IMR-90 (cell line): ENCODE measurements at regions of chr4 and their contacts with region 1.

Region 1: DNA sequence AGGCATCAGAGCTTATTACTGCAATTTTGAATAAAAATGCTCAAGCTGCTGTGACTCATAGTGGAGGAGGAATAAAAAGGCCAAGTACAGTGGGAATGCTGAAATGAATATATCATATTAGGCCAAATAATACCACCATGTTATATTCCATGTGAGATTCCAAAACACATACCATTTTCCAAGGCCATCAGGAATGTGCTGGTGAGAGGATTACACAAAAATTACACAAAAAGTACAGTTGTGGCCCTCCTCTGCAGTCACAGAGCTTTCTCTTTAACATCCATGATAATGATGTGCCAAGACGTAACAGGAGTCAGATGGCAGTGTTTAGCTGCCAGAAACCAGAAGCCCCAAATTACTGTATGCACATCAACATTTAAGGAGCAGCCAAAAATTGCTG is 153.5 kb downstream of the PCDH18 start:
- DNase-seq: no peak
- ATAC-seq: 0 out of 2 replicates have a peak, but pooled peaks have one; percentile 27
- H3K4me3 ChIP-seq: no peak overlapping the region
- H3K27ac ChIP-seq: no peak overlapping the region
- H3K4me1 ChIP-seq: peaks cover 3% of the 10 kb centered on the region; the same call in 1 of the 2 replicates
- H3K27me3 ChIP-seq: no peaks in the 10 kb centered on the region
- CTCF ChIP-seq: no peak
- POLR2A ChIP-seq: no peak
- RAD21 ChIP-seq: no peak

Region 2: GRCh38 chr4:137408527-137409177 is 29.8 kb after region 1 on chr4:
- CTCF ChIA-PET with region 1: no interaction called
- POLR2A ChIA-PET with region 1: no interaction called
- dilution Hi-C with region 1: no loop called
- in situ Hi-C with region 1: no loop called
- intact Hi-C with region 1: loop called (anchors 1 kb)
- DNase-seq: no peak
- ATAC-seq: no peak
- H3K4me3 ChIP-seq: no peak overlapping the region
- H3K27ac ChIP-seq: no peak overlapping the region
- H3K4me1 ChIP-seq: no peaks in the 10 kb centered on the region
- H3K27me3 ChIP-seq: no peaks in the 10 kb centered on the region
- CTCF ChIP-seq: no peak
- POLR2A ChIP-seq: no peak
- RAD21 ChIP-seq: no peak

Region 3: GRCh38 chr4:138996090-138996489 is 1617.3 kb after region 1 on chr4:
- CTCF ChIA-PET with region 1: no interaction called
- POLR2A ChIA-PET with region 1: no interaction called
- dilution Hi-C with region 1: no loop called
- in situ Hi-C with region 1: no loop called
- intact Hi-C with region 1: no loop called
- DNase-seq: no peak
- ATAC-seq: no peak
- H3K4me3 ChIP-seq: no peak overlapping the region
- H3K27ac ChIP-seq: no peak overlapping the region
- H3K4me1 ChIP-seq: no peaks in the 10 kb centered on the region
- H3K27me3 ChIP-seq: peaks cover 2% of the 10 kb centered on the region; the same call in 1 of the 2 replicates
- CTCF ChIP-seq: no peak
- POLR2A ChIP-seq: no peak
- RAD21 ChIP-seq: no peak